Right lobe of liver (tissue), 6 donors: ENCODE measurements at regions of chr13 and their contacts with region 1.

Region 1: DNA sequence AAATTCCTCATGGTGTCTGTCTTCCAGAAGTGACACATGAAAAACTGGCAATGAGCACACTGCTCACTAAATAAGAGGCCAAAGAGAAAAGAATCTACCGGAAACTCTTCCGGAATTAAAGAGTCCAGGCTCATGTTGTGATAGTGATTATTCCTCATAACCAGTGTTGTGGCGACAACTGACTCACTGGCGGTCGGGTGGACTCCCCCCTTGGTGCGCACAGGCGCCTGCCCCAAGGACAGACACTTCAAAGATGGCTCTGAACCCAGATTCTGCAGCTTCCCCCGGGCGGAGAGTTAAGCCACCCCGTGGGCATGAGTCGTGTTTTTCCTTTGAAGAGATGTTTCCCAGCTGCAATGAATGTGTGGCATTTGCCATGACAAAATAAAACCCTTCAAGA is 10.3 kb downstream of the IL17D start:
- DNase-seq: no peak
- ATAC-seq: no peak
- H3K4me3 ChIP-seq: no peak overlapping the region
- H3K27ac ChIP-seq: peak overlapping the region in 1 of 3 donors; percentile 37
- H3K4me1 ChIP-seq: peaks cover 0 to 19% (median 0%) of the 10 kb centered on the region in 4 donors
- H3K27me3 ChIP-seq: no peaks in the 10 kb centered on the region
- CTCF ChIP-seq: no peak
- POLR2A ChIP-seq: no peak

Region 2: GRCh38 chr13:20320885-20321284 is 392.9 kb before region 1 on chr13:
- intact Hi-C with region 1: no loop called
- DNase-seq: no peak
- ATAC-seq: no peak
- H3K4me3 ChIP-seq: no peak overlapping the region
- H3K27ac ChIP-seq: no peak overlapping the region
- H3K4me1 ChIP-seq: no peaks in the 10 kb centered on the region
- H3K27me3 ChIP-seq: no peaks in the 10 kb centered on the region
- CTCF ChIP-seq: no peak
- POLR2A ChIP-seq: no peak

Region 3: DNA sequence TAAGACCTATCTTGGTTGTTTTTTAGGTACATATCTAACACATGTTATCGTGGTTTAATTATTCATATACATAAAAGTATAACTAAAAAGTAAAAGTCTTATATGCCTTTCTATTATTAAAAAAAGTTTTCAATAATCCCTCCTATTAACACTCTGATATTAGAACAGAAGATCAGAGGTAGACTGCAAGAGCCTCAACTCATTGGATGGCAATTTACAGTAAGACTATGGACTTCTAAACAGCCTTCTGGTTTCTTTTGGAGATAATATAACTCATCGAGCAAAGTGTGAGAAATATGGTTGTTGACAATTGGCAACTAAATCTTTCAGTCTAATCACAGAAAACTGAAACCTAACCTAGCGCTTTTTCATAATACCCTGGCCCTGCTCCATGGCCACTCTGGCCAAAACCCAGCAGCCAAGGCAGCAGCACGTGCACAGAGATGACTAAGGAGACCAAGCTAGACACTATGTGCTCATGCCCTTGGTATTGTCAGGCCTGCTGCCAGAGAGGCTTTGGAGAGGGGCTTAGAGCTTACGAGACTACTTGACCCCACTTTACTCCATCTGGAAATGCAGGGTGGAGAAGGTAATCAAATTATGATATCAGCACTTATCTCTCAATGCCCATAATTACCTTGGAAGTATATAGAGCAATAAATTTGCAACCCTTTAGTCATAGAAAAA is 100.6 kb after region 1 on chr13:
- intact Hi-C with region 1: loop called in 1 of 2 experiments (anchors 10 kb)
- DNase-seq: peak; percentile 47 to 68 (median 59)
- ATAC-seq: peak; percentile 81 to 91 (median 87)
- H3K4me3 ChIP-seq: no peak overlapping the region
- H3K27ac ChIP-seq: no peak overlapping the region
- H3K4me1 ChIP-seq: no peaks in the 10 kb centered on the region
- H3K27me3 ChIP-seq: no peaks in the 10 kb centered on the region
- CTCF ChIP-seq: no peak
- POLR2A ChIP-seq: no peak

Region 4: DNA sequence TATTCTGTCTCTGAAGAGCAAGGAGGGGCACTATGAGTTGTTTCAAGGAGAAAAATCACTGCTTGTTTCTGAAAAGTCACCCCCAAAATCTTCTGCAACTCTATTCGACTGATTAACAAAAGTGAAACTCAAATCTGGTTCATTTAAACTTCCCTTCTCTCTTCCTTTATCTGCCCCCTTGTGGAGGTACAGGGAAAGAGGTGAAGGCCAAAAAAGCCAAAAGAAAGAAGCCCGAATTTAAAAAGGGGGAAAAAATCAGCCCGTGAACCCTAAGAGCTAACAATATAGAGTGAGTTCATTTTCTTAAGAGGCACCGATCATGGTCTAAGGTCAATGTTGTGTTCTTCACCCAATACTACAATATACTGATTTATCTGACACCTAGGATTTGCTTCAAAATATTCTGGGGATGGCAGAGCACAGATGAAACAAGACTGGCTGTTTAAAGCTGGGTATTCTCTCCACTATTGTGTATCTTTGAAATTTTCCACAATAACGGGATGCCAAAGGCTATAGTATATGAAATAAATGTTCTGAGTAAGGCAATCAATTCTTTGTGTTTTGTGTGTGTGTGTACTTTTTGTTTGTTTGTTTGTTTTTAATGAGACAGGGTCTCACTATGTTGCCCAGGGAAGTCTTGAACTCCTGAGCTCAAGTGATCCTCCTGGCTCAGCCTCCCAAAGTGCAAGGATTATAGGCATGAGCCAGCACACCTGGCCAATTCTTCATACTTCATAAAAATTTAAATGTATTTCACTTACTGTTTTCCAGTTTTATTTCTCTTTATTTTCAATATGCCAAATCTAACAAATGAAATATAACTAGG is 115.0 kb after region 1 on chr13:
- intact Hi-C with region 1: loop called in 1 of 2 experiments (anchors 10 kb)
- DNase-seq: no peak
- ATAC-seq: peak; percentile 87 to 96 (median 91)
- H3K4me3 ChIP-seq: peak overlapping the region in 2 of 3 donors; percentile 22 to 30
- H3K27ac ChIP-seq: no peak overlapping the region
- H3K4me1 ChIP-seq: peaks cover 0 to 5% (median 0%) of the 10 kb centered on the region in 4 donors
- H3K27me3 ChIP-seq: no peaks in the 10 kb centered on the region
- CTCF ChIP-seq: peak; percentile 73 to 85 (median 82)
- POLR2A ChIP-seq: no peak

Region 5: GRCh38 chr13:20924758-20925394 is 211.1 kb after region 1 on chr13:
- intact Hi-C with region 1: loop called in 1 of 2 experiments (anchors 10 kb)
- DNase-seq: peak; percentile 65 to 73 (median 69)
- ATAC-seq: peak; percentile 70 to 79 (median 72)
- H3K4me3 ChIP-seq: no peak overlapping the region
- H3K27ac ChIP-seq: no peak overlapping the region
- H3K4me1 ChIP-seq: no peaks in the 10 kb centered on the region
- H3K27me3 ChIP-seq: no peaks in the 10 kb centered on the region
- CTCF ChIP-seq: peak; percentile 67 to 83 (median 77)
- POLR2A ChIP-seq: no peak